Heart right ventricle (tissue), 16 donors: ENCODE measurements at regions of chr18 and their contacts with region 1.

Region 1: GRCh38 chr18:59996370-59996966 is 96.7 kb downstream of the PMAIP1 start:
- DNase-seq: no peak
- ATAC-seq: no peak
- H3K4me3 ChIP-seq: no peak overlapping the region
- H3K27ac ChIP-seq: no peak overlapping the region
- H3K4me1 ChIP-seq: no peaks in the 10 kb centered on the region
- H3K27me3 ChIP-seq: peaks cover 0 to 48% (median 14%) of the 10 kb centered on the region in 7 donors
- CTCF ChIP-seq: peak in 7 of 9 donors; percentile 22 to 45 (median 37)

Region 2: GRCh38 chr18:59748628-59749360 is 247.7 kb before region 1 on chr18:
- intact Hi-C with region 1: no loop called
- DNase-seq: no peak
- ATAC-seq: no peak
- H3K4me3 ChIP-seq: no peak overlapping the region
- H3K27ac ChIP-seq: no peak overlapping the region
- H3K4me1 ChIP-seq: no peaks in the 10 kb centered on the region
- H3K27me3 ChIP-seq: peaks cover 0 to 14% (median 0%) of the 10 kb centered on the region in 7 donors
- CTCF ChIP-seq: no peak

Region 3: GRCh38 chr18:59985289-59985688 is 11.2 kb before region 1 on chr18:
- intact Hi-C with region 1: no loop called
- DNase-seq: no peak
- ATAC-seq: no peak
- H3K4me3 ChIP-seq: no peak overlapping the region
- H3K27ac ChIP-seq: no peak overlapping the region
- H3K4me1 ChIP-seq: no peaks in the 10 kb centered on the region
- H3K27me3 ChIP-seq: peaks cover 0 to 14% (median 5%) of the 10 kb centered on the region in 7 donors
- CTCF ChIP-seq: no peak

Region 4: GRCh38 chr18:60017371-60017770 is 20.9 kb after region 1 on chr18:
- intact Hi-C with region 1: no loop called
- DNase-seq: no peak
- ATAC-seq: no peak
- H3K4me3 ChIP-seq: no peak overlapping the region
- H3K27ac ChIP-seq: no peak overlapping the region
- H3K4me1 ChIP-seq: no peaks in the 10 kb centered on the region
- H3K27me3 ChIP-seq: no peaks in the 10 kb centered on the region
- CTCF ChIP-seq: no peak

Region 5: GRCh38 chr18:60027397-60027796 is 30.9 kb after region 1 on chr18:
- intact Hi-C with region 1: loop called in 1 of 10 experiments (anchors 2 kb)
- DNase-seq: no peak
- ATAC-seq: no peak
- H3K4me3 ChIP-seq: no peak overlapping the region
- H3K27ac ChIP-seq: no peak overlapping the region
- H3K4me1 ChIP-seq: no peaks in the 10 kb centered on the region
- H3K27me3 ChIP-seq: no peaks in the 10 kb centered on the region
- CTCF ChIP-seq: no peak

Region 6: DNA sequence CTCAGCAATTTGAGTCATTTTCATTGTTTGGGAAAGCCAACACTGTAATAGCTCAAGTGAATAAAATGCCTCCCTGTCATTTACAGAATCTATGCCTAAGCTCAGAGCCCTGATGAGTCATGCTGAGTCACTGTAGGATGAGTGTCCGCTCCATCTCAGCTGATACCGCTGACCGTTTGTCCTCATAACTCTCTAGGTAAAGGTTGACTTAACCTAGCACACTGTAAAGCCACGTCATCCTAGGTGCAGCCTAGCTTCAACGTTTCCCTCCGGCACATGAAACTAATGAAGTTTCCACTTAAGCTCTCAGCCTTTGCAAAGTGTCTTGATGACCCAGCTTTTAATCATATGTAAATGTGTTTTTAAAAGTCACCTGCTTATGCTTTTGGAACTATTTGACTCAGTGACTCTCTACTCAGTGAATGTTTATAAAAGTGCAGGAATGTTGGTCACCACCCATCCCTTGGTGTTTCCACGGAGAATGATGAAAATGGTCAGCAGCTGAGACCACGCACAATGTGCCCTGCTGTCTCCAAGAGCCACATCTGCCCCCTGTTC is 57.4 kb after region 1 on chr18:
- intact Hi-C with region 1: no loop called
- DNase-seq: no peak
- ATAC-seq: no peak
- H3K4me3 ChIP-seq: no peak overlapping the region
- H3K27ac ChIP-seq: no peak overlapping the region
- H3K4me1 ChIP-seq: no peaks in the 10 kb centered on the region
- H3K27me3 ChIP-seq: no peaks in the 10 kb centered on the region
- CTCF ChIP-seq: no peak